Activated CD4-positive, alpha-beta T cell treated with anti-CD3 and anti-CD28 coated beads for 36 hours (primary cell): ENCODE measurements at regions of chr4 and their contacts with region 1.

Region 1: DNA sequence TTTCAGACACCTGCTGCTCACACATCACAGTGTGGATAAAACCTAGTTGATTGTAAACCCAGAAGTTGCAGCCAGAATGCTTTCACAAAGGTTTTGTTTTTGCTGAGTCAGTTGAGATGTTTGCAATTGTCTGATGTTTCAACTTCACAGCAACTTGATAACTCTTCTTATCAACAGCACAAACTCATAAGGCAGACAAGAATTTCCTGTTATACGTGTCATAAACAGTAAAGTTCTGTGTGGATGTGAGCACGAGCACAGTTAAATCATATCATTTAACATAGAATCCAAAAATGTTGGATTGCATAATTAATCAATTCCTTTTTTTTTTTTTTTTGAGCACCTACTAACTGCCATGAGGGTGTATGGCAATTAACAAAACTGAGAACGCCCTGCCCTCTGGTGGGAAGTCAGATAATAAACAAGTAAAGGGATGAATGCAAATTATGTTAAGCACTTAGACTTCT is 512.2 kb downstream of the PDHA2 start:
- DNase-seq: peak; percentile 43
- ATAC-seq: no peak
- H3K4me3 Mint-ChIP-seq: no peak overlapping the region
- H3K27ac Mint-ChIP-seq: no peak overlapping the region
- H3K4me1 Mint-ChIP-seq: no peaks in the 10 kb centered on the region
- H3K27me3 Mint-ChIP-seq: no peaks in the 10 kb centered on the region

Region 2: DNA sequence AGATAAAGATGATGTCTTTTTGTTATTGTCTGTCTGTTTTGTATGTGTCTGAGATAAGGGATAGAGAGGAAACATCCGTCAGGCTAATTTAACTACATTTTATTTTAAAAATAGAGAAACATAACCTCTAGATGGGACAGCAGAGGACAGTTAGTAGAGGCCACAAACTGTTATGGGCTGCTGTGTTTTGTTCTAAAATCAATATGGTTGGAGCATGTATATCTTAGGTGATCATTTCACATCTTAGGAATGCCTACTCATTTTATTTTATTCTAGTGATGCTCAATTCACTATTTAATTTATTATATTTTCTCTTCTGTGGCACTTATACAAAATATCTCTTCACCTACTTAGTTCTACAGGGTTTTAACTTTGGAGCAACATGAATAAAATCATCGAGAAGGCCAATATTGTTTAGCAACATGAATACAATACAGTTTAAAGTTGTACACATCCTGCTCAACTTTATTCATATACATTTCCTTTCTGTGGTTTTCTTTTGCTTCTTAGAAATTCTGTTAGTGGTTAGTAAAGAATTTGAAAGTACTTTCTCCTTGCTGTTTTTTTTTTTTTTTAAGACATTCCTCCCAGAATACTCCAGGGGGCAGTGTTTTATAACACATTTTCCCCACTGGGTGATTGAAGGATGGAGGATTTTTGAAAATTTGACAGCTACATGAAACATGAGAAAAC is 1196.2 kb before region 1 on chr4:
- CTCF ChIA-PET with region 1: no interaction called
- POLR2A ChIA-PET with region 1: no interaction called
- intact Hi-C with region 1: loop called in 1 of 2 experiments (anchors 5 kb)
- DNase-seq: no peak
- ATAC-seq: peak; percentile 63
- H3K4me3 Mint-ChIP-seq: no peak overlapping the region
- H3K27ac Mint-ChIP-seq: peak overlapping the region; percentile 39
- H3K4me1 Mint-ChIP-seq: peaks cover 12% of the 10 kb centered on the region
- H3K27me3 Mint-ChIP-seq: no peaks in the 10 kb centered on the region

Region 3: DNA sequence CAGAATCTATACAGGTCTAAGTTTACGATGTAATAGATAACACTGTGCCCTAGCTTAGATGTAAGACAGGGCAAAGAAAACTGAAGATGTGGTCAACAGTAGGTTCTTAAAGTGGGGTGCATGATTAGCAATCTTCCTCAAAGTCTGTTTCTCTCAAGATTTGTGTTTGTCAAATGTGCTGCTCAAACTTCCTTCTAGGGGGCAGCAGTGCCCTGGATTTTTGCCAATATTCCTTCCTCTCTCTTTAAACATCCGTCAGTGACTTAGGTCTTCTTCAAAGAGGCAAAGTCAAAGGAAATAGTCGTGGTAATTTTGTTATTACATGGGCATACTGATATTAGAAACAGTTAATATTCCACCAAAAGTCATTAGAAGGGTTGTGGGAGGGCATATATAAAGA is 516.4 kb before region 1 on chr4:
- CTCF ChIA-PET with region 1: no interaction called
- POLR2A ChIA-PET with region 1: no interaction called
- intact Hi-C with region 1: loop called in 1 of 2 experiments (anchors 5 kb)
- DNase-seq: peak; percentile 8
- ATAC-seq: no peak
- H3K4me3 Mint-ChIP-seq: no peak overlapping the region
- H3K27ac Mint-ChIP-seq: no peak overlapping the region
- H3K4me1 Mint-ChIP-seq: no peaks in the 10 kb centered on the region
- H3K27me3 Mint-ChIP-seq: no peaks in the 10 kb centered on the region

Region 4: GRCh38 chr4:96375367-96375766 is 23.3 kb after region 1 on chr4:
- CTCF ChIA-PET with region 1: no interaction called
- POLR2A ChIA-PET with region 1: no interaction called
- intact Hi-C with region 1: no loop called
- DNase-seq: no peak
- ATAC-seq: no peak
- H3K4me3 Mint-ChIP-seq: no peak overlapping the region
- H3K27ac Mint-ChIP-seq: no peak overlapping the region
- H3K4me1 Mint-ChIP-seq: no peaks in the 10 kb centered on the region
- H3K27me3 Mint-ChIP-seq: no peaks in the 10 kb centered on the region